Vagina (tissue), 2 donors: ENCODE measurements at regions of chrX and their contacts with region 1.

Region 1: DNA sequence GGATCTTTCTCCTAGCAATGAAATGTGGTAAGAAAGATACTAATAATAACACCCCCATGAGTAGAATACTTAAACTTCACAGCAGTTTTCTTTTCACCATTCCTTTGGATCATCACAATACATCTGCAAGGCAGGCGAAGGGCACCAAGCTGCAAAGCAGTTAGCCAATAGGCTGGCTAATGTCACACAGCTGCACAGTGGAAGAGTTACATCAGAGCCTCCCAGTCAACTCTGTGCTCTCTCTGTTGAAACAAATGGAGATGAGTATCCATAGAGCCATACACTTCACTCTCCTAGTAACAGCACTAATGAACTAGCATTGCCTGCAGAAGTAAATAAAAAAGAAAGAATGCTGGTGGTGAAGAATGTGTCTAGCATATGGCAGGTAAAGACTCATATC is 139.0 kb downstream of the ATG4A start:
- DNase-seq: no peak
- H3K4me3 ChIP-seq: no peak overlapping the region
- H3K27ac ChIP-seq: no peak overlapping the region
- H3K4me1 ChIP-seq: no peaks in the 10 kb centered on the region
- H3K27me3 ChIP-seq: no peaks in the 10 kb centered on the region
- CTCF ChIP-seq: no peak
- POLR2A ChIP-seq: no peak

Region 2: GRCh38 chrX:108159028-108159670 is 71.4 kb before region 1 on chrX:
- intact Hi-C with region 1: loop called (anchors 2 kb)
- DNase-seq: peak in 1 of 2 donors; percentile 84
- H3K4me3 ChIP-seq: no peak overlapping the region
- H3K27ac ChIP-seq: no peak overlapping the region
- H3K4me1 ChIP-seq: no peaks in the 10 kb centered on the region
- H3K27me3 ChIP-seq: no peaks in the 10 kb centered on the region
- CTCF ChIP-seq: no peak
- POLR2A ChIP-seq: no peak

Region 3: DNA sequence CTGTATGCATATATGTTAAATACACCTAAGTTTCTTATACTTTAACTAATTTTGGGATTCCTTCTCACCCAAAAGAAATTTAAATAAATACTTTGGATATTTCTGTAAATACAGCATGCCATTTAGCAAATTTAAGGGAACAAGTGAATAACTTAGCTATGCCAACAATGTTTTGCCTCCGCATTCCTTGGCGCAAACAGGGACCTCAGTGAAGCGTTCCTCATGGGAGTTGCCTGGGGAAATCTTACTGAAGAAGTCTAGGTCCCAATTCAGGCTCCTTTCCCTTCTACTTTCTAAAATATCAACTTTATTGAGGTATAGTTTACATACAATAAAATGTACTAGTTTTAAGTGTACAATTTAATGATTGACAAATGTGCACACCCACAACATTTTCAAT is 234.0 kb after region 1 on chrX:
- intact Hi-C with region 1: no loop called
- DNase-seq: no peak
- H3K4me3 ChIP-seq: no peak overlapping the region
- H3K27ac ChIP-seq: no peak overlapping the region
- H3K4me1 ChIP-seq: no peaks in the 10 kb centered on the region
- H3K27me3 ChIP-seq: no peaks in the 10 kb centered on the region
- CTCF ChIP-seq: no peak
- POLR2A ChIP-seq: no peak